Calu3 (cell line): ENCODE measurements at regions of chr11 and their contacts with region 1.

Region 1: GRCh38 chr11:37449146-37449545 is 851.1 kb upstream of the RAG2 start:
- DNase-seq: peak; percentile 26
- H3K4me3 Mint-ChIP-seq: no peak overlapping the region
- H3K27ac Mint-ChIP-seq: no peak overlapping the region
- H3K4me1 Mint-ChIP-seq: peaks cover 34% of the 10 kb centered on the region
- H3K27me3 Mint-ChIP-seq: no peaks in the 10 kb centered on the region
- CTCF ChIP-seq: peak; percentile 47

Region 2: DNA sequence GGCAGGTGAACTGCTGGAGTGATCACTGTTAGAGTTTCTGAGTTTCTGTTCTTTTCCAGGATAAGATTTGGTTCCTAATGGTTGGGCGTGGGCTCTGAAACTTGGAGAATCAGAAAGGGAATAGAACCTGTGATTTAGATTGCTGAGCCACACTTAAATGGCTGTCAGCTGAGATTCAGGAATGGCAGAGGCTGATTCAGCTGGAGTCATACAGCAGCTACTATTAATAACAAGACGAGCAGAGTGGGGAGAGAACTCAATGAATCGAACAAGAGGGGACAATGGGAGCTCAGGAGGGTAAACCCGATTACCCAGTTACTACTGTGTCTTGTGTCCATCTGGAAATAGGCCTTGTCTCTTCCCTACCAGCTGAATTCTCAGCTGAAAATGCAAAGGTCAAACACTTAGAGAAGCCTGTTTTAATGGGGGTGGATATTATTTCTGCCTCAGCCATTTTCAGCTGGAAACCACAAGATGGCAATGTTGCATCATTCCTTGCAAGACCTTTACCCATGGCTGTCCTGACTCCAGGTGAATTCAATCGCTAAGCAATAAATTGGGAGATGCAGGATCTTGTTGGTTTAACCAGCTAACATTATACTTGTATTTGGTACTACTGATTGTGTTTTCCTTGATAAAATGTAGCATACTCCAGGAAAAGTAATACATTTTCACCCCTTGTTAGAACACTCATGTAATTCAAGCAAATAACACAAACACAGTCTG is 746.7 kb before region 1 on chr11:
- CTCF ChIA-PET with region 1: no interaction called
- intact Hi-C with region 1: loop called (anchors 2 kb)
- DNase-seq: peak; percentile 46
- H3K4me3 Mint-ChIP-seq: no peak overlapping the region
- H3K27ac Mint-ChIP-seq: no peak overlapping the region
- H3K4me1 Mint-ChIP-seq: peaks cover 9% of the 10 kb centered on the region
- H3K27me3 Mint-ChIP-seq: peaks cover 5% of the 10 kb centered on the region
- CTCF ChIP-seq: peak; percentile 49

Region 3: GRCh38 chr11:37313266-37313665 is 135.9 kb before region 1 on chr11:
- CTCF ChIA-PET with region 1: no interaction called
- intact Hi-C with region 1: no loop called
- DNase-seq: no peak
- H3K4me3 Mint-ChIP-seq: no peak overlapping the region
- H3K27ac Mint-ChIP-seq: no peak overlapping the region
- H3K4me1 Mint-ChIP-seq: peaks cover 8% of the 10 kb centered on the region
- H3K27me3 Mint-ChIP-seq: no peaks in the 10 kb centered on the region
- CTCF ChIP-seq: no peak

Region 4: GRCh38 chr11:37504060-37504611 is 55.0 kb after region 1 on chr11:
- CTCF ChIA-PET with region 1: no interaction called
- intact Hi-C with region 1: loop called (anchors 1 kb)
- DNase-seq: peak; percentile 62
- H3K4me3 Mint-ChIP-seq: peak overlapping the region; percentile 0
- H3K27ac Mint-ChIP-seq: peak overlapping the region; percentile 16
- H3K4me1 Mint-ChIP-seq: peaks cover 51% of the 10 kb centered on the region
- H3K27me3 Mint-ChIP-seq: no peaks in the 10 kb centered on the region
- CTCF ChIP-seq: no peak

Region 5: GRCh38 chr11:37630866-37631265 is 181.7 kb after region 1 on chr11:
- CTCF ChIA-PET with region 1: no interaction called
- intact Hi-C with region 1: loop called (anchors 10 kb)
- DNase-seq: no peak
- H3K4me3 Mint-ChIP-seq: no peak overlapping the region
- H3K27ac Mint-ChIP-seq: no peak overlapping the region
- H3K4me1 Mint-ChIP-seq: no peaks in the 10 kb centered on the region
- H3K27me3 Mint-ChIP-seq: no peaks in the 10 kb centered on the region
- CTCF ChIP-seq: no peak

Region 6: DNA sequence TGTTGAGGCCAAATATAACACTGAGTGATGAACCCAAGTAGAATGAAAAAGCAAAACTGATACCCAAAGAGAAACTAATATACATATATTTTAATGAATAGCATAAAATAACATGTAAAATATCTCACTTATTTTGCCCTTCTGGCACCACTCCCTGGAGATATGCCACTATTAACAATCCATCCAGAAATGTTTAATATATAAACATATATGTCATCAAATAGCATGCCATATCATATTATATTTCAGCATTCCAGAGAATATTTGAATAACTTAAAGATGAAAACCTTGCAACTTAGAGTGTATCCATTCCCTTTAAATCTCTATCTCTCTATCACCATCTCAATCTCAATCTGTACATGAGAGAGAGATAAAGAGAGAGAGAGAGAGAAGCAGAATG is 222.2 kb after region 1 on chr11:
- CTCF ChIA-PET with region 1: no interaction called
- intact Hi-C with region 1: no loop called
- DNase-seq: no peak
- H3K4me3 Mint-ChIP-seq: no peak overlapping the region
- H3K27ac Mint-ChIP-seq: no peak overlapping the region
- H3K4me1 Mint-ChIP-seq: no peaks in the 10 kb centered on the region
- H3K27me3 Mint-ChIP-seq: no peaks in the 10 kb centered on the region
- CTCF ChIP-seq: no peak

Region 7: GRCh38 chr11:38791302-38791961 is 1342.3 kb after region 1 on chr11:
- CTCF ChIA-PET with region 1: no interaction called
- intact Hi-C with region 1: loop called (anchors 1 kb)
- DNase-seq: peak; percentile 56
- H3K4me3 Mint-ChIP-seq: no peak overlapping the region
- H3K27ac Mint-ChIP-seq: no peak overlapping the region
- H3K4me1 Mint-ChIP-seq: no peaks in the 10 kb centered on the region
- H3K27me3 Mint-ChIP-seq: no peaks in the 10 kb centered on the region
- CTCF ChIP-seq: peak; percentile 64